Gastrocnemius medialis (tissue), 4 donors: ENCODE measurements at regions of chr2 and their contacts with region 1.

Region 1: GRCh38 chr2:54966165-54966832 is 84.0 kb downstream of the RTN4 start:
- DNase-seq: peak; percentile 53 to 73
- ATAC-seq: peak; percentile 57 to 70
- H3K4me3 ChIP-seq: no peak overlapping the region
- H3K27ac ChIP-seq: peak overlapping the region; percentile 89 to 93 (median 91)
- H3K4me1 ChIP-seq: peaks cover 65 to 88% of the 10 kb centered on the region in 2 donors
- H3K27me3 ChIP-seq: no peaks in the 10 kb centered on the region
- CTCF ChIP-seq: no peak
- POLR2A ChIP-seq: peak in 1 of 2 donors; percentile 18

Region 2: GRCh38 chr2:54906716-54907115 is 59.6 kb before region 1 on chr2:
- in situ Hi-C with region 1: no loop called
- intact Hi-C with region 1: no loop called
- DNase-seq: no peak
- ATAC-seq: no peak
- H3K4me3 ChIP-seq: no peak overlapping the region
- H3K27ac ChIP-seq: peak overlapping the region; percentile 41 to 73 (median 68)
- H3K4me1 ChIP-seq: peaks cover 25 to 40% of the 10 kb centered on the region in 2 donors
- H3K27me3 ChIP-seq: no peaks in the 10 kb centered on the region
- CTCF ChIP-seq: no peak
- POLR2A ChIP-seq: no peak

Region 3: DNA sequence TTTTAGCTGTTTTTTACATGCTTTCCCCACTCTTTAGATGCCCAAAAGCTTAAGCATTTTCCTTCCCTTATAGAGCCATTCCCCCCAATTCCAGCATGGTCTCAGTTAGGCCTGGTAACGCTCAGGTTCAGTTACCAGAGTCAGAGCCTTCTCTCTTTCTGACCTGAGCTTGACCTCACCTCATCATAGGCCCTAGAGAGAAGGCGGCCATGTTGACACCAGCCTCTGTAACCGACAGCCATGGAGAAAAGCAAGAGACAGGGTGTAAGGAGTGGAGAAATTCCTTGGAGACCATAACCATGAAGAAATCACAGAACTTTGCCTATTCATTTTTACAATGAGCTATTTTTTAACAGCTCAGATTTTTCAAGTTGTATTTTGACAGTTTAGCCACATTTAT is 15.5 kb before region 1 on chr2:
- in situ Hi-C with region 1: no loop called
- intact Hi-C with region 1: loop called (anchors 1 kb)
- DNase-seq: no peak
- ATAC-seq: no peak
- H3K4me3 ChIP-seq: no peak overlapping the region
- H3K27ac ChIP-seq: no peak overlapping the region
- H3K4me1 ChIP-seq: peaks cover 19 to 22% of the 10 kb centered on the region in 2 donors
- H3K27me3 ChIP-seq: no peaks in the 10 kb centered on the region
- CTCF ChIP-seq: no peak
- POLR2A ChIP-seq: no peak

Region 4: DNA sequence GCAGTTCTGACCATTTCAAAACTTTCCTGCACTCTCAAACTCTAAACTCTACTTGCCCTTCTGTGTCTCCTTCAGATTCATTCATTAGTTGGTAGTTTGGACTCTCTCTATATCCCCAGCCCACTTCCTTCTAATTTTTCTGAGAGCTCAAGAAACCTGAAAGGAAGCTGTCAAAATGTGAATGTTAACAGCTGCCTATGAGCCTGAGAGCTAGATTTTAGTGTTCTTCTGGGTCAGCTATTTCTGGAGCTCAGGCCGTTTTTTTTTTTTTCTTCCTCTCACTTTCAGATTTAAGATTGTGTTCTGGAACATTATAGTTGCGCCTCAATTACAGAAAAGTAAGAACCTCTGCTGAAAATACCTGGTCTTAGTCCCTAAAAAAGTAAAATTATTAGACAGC is 10.8 kb after region 1 on chr2:
- in situ Hi-C with region 1: no loop called
- intact Hi-C with region 1: no loop called
- DNase-seq: no peak
- ATAC-seq: no peak
- H3K4me3 ChIP-seq: peak overlapping the region; percentile 3 to 36 (median 21)
- H3K27ac ChIP-seq: peak overlapping the region; percentile 89 to 94 (median 91)
- H3K4me1 ChIP-seq: peaks cover 85 to 98% of the 10 kb centered on the region in 2 donors
- H3K27me3 ChIP-seq: no peaks in the 10 kb centered on the region
- CTCF ChIP-seq: no peak
- POLR2A ChIP-seq: no peak

Region 5: DNA sequence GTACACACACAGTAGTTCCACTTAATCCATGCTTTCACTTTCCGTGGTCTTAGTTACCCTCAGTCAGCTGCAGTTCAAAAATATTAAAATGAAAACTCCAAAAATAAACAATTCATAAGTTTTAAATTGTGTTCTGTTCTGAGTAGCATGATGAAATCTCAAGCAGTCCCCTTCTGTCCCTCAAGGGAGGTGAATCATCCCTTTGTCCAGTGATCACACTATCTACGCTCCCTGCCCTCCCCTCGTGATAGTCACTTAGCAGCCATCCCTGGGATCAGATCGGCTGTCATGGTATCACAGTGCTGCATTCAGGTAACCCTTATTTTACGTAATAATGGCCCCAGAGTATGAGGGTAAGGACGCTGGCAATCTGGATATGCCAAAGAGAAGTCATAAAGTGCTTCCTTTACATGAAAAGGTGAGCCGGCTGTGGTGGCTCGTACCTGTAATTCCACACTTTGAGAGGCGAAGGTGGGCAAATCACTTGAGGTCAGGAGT is 89.8 kb after region 1 on chr2:
- in situ Hi-C with region 1: no loop called
- intact Hi-C with region 1: no loop called
- DNase-seq: peak; percentile 33 to 66
- ATAC-seq: peak; percentile 60 to 62
- H3K4me3 ChIP-seq: no peak overlapping the region
- H3K27ac ChIP-seq: peak overlapping the region in 1 of 4 donors; percentile 37
- H3K4me1 ChIP-seq: peaks cover 13 to 16% of the 10 kb centered on the region in 2 donors
- H3K27me3 ChIP-seq: no peaks in the 10 kb centered on the region
- CTCF ChIP-seq: no peak
- POLR2A ChIP-seq: no peak